Motor neuron (in vitro differentiated cells): ENCODE measurements at regions of chr2 and their contacts with region 1.

Region 1: GRCh38 chr2:191501561-191502168 is 176.3 kb upstream of the NABP1 start:
- ATAC-seq: peak in 4 of 8 experiments; percentile 42 to 66 (median 60)
- H3K4me3 ChIP-seq: no peak overlapping the region
- H3K27ac ChIP-seq: no peak overlapping the region
- H3K4me1 ChIP-seq: peaks cover 0 to 6% of the 10 kb centered on the region in 2 donors

Region 2: DNA sequence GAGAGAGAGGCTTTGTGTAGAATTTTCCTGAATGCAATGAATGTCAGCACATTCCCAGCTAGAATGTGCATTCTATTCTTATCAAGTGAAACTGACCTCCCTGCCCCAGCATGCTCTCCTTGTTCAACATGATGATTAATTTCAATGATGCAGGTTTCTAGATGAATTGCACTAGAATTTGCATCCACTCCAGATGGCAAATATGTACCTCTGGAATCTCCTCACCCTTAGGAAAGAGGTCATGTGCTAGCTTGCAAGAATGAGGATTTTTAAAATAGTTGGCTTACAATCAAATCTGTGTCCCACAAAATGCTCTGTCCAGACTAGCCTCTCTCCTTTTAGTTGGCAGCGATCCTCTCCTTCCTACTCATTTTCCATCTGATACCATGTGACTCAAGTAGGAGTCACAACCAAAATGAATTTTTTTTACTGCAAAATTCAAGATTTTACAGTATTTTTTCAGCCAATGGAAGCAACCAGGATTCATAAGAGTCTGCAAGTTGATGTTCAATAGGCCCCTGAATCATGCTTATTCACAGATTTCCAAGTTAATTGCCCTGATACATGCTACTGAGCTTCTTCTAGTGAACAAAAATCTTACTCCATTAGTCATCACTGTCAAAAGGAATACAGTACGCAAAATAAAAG is 329.8 kb before region 1 on chr2:
- in situ Hi-C with region 1: loop called in 6 of 9 experiments (anchors 10 to 25 kb)
- ATAC-seq: peak in 4 of 8 experiments; percentile 13 to 82 (median 70)
- H3K4me3 ChIP-seq: no peak overlapping the region
- H3K27ac ChIP-seq: no peak overlapping the region
- H3K4me1 ChIP-seq: peaks cover 0 to 4% of the 10 kb centered on the region in 2 donors

Region 3: DNA sequence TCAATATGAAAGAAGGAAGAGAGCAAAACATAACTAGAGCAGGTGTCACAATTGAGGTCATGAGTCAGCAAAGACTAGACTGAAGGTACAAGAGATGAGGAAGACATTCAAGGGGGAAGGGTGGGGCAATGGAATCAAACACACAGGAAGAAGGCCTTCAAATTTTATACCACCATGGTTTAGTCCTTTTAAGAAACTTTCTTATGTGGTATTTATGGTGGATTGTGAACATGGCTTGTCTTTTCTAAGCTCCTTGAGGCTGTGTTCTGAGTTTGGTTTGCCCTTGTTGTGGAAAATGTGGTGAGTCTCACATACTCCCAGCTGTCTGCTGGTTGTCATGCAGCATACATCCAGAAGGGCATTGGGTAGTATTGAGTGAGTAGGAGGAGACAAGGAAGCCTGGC is 238.4 kb after region 1 on chr2:
- in situ Hi-C with region 1: no loop called
- ATAC-seq: no peak
- H3K4me3 ChIP-seq: no peak overlapping the region
- H3K27ac ChIP-seq: no peak overlapping the region
- H3K4me1 ChIP-seq: peaks cover 0 to 3% of the 10 kb centered on the region in 2 donors